AG04449 (cell line): ENCODE measurements at regions of chr11 and their contacts with region 1.

Region 1: DNA sequence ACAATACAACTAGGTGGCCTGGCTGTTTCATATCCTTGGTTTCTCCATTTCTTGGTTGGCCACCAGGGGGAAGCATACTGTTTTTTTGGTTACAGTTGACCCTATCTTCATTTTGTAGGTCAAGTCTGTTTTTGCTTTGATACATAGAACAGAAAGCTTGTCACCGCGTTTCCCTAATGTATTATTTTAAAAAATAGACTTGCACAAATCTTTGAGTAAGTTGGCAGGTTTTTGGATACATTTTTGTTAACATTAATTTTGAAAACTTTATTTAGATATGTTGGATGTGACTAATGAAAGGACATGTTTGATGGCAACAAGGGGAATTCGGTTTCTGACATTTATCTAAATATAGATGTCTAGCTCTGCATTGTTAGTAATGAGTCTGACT is 3.0 kb downstream of the NCR3LG1 start:
- DNase-seq: no peak
- H3K4me3 ChIP-seq: no peak overlapping the region
- CTCF ChIP-seq: peak; percentile 59

Region 2: DNA sequence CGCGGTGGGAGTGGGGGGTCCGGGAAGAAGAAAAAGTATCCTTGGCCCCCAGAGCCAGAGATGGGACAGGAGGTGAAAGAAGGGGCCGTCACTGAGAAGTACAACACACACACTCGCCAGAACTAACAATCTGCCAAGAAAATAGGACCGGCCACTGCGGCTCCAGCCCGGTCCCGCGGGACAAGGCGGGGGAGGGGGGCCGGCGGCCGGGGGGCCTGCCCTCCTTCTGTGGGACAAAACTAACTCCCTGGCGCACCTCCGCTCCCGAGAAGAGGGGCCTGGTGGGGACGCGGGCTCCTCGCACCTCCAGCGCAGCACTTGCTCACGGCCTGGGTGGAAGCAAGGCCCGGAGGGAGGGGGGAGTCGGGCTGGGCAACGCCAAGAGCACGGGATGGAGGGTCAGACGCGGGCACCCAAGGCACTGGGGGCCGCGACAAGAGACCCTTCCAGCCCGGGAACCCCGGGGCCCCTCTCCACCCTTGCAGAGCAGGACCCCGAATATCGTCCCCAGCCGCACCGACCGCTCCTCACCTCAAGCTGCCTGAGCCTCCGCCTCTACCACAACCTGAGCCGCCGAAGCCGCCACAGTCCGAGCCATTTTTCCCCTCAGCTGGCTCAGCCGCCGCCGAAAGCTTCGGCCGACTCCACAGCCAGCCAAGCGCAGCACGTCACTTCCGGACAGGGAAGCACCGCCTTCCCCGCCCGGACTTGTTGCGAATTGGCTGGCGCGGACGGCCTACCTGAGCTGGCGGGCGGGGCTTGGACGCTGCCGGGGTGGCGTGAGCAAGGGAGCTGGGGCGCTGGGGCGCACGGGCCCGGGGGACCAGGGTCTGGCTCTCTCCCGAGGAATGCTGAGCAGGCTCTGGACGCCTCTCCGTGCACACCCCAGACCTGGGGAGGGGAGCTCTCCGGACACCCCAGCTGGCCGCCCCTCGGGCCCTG is 147.0 kb before region 1 on chr11 and contains the start of gene PIK3C2A:
- CTCF ChIA-PET with region 1: interaction called, 13 read pairs
- POLR2A ChIA-PET with region 1: interaction called, 3 read pairs
- DNase-seq: peak; percentile 54
- H3K4me3 ChIP-seq: peak within 1 kb of the TSS; percentile 90
- CTCF ChIP-seq: no peak

Region 3: DNA sequence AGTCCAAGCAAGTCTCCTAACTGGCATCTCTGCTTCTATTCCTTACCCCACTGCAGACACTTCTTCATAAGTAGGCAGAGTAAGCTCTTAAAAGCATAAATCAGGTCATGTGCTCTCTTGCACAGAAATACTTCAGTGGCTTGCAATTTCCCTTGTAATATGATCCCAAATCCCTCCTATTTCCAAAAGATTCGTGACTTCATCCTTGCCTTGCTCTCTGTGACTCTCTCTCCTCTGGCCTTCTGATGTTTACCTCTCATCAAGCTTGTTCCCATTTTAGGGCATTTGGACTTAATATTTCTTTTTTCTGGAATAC is 40.4 kb before region 1 on chr11:
- CTCF ChIA-PET with region 1: interaction called, 12 read pairs
- POLR2A ChIA-PET with region 1: no interaction called
- DNase-seq: peak; percentile 57
- H3K4me3 ChIP-seq: no peak overlapping the region
- CTCF ChIP-seq: no peak

Region 4: DNA sequence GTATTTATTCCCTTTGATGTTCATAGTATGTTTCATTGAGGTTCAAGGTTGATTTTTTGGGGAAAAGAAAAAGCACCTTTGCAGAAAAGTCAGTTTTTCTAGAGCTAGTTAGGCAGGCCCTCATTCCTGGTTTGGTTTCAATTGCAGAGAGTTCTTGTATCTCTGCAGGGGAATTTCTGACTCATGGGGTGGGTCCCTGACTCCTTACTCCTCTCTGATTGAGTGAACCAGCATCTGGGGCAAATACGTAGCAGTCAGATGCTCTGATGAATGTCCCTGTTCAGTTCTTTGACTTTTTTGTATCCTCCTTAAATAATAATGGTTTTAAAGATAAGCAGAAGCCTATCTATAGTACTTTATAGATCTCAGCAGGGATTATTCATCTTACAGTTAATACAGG is 10.7 kb before region 1 on chr11:
- CTCF ChIA-PET with region 1: interaction called, 25 read pairs
- POLR2A ChIA-PET with region 1: no interaction called
- DNase-seq: peak; percentile 53
- H3K4me3 ChIP-seq: no peak overlapping the region
- CTCF ChIP-seq: no peak

Region 5: DNA sequence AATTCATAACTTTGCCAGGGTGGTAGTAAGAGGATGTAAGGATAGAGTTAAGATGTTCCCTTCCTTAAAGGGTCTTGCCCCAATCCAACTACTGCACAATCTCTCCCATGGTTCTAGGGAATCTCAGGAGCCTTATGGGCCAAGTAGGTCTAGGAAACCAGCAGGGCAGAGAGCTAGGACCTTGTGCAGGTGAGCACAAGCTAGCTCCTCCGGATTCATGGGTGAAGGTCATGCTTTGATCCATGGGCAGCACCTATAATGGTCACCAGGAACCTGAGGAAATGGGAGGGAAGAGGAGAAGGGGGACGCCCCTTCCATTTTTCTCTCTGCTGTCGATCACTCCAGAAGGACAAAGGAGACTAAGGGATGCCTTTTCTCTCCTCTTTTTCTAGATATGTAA is 17.0 kb after region 1 on chr11:
- CTCF ChIA-PET with region 1: interaction called, 79 read pairs
- POLR2A ChIA-PET with region 1: no interaction called
- DNase-seq: no peak
- H3K4me3 ChIP-seq: no peak overlapping the region
- CTCF ChIP-seq: no peak

Region 6: GRCh38 chr11:17504330-17505107 is 149.9 kb after region 1 on chr11:
- CTCF ChIA-PET with region 1: interaction called, 30 read pairs
- POLR2A ChIA-PET with region 1: no interaction called
- DNase-seq: no peak
- H3K4me3 ChIP-seq: no peak overlapping the region
- CTCF ChIP-seq: peak; percentile 87

Region 7: DNA sequence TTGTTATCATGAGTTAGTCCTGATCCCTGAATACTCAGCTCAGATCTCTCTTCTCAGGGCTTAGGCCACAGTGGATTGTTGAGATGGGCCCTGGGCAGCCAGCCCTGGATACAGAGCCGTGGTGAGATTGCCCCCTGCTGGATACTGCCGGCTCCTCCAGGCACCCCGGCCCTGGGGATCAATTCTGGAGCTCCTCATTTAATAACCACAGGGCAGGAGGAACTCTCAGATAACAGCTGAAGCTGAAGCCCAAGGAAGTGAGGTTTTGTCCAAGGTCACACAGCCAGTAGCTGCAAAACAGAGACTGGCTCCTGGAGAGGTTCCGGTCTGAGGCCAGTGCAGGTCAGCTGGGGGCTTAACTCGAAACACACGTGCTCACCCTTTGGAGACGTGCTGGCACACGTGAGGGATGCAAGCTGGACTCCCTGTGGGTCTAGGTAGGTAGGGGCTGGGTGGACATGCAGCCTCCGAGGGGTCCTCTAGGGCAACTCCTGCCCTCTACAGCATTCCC is 173.6 kb after region 1 on chr11:
- CTCF ChIA-PET with region 1: interaction called, 11 read pairs
- POLR2A ChIA-PET with region 1: no interaction called
- DNase-seq: no peak
- H3K4me3 ChIP-seq: no peak overlapping the region
- CTCF ChIP-seq: peak; percentile 75